ENCODE measurements at regions of chr9 and their contacts with region 1.

Region 1: GRCh38 chr9:111803924-111804323 is 9.2 kb upstream of the SHOC1 start:
- DNase-seq: no peak
- ATAC-seq: no peak
- H3K4me3 Mint-ChIP-seq: no peak overlapping the region
- H3K27ac Mint-ChIP-seq: no peak overlapping the region
- H3K4me1 Mint-ChIP-seq: peaks cover 3% of the 10 kb centered on the region
- H3K27me3 Mint-ChIP-seq: no peaks in the 10 kb centered on the region
- CTCF ChIP-seq: no peak

Region 2: GRCh38 chr9:110156902-110157301 is 1647.0 kb before region 1 on chr9:
- CTCF ChIA-PET with region 1: no interaction called
- POLR2A ChIA-PET with region 1: no interaction called
- intact Hi-C with region 1: no loop called
- DNase-seq: no peak
- ATAC-seq: peak; percentile 76
- H3K4me3 Mint-ChIP-seq: peak overlapping the region; percentile 28
- H3K27ac Mint-ChIP-seq: peak overlapping the region; percentile 68
- H3K4me1 Mint-ChIP-seq: peaks cover 99% of the 10 kb centered on the region
- H3K27me3 Mint-ChIP-seq: no peaks in the 10 kb centered on the region
- CTCF ChIP-seq: no peak

Region 3: DNA sequence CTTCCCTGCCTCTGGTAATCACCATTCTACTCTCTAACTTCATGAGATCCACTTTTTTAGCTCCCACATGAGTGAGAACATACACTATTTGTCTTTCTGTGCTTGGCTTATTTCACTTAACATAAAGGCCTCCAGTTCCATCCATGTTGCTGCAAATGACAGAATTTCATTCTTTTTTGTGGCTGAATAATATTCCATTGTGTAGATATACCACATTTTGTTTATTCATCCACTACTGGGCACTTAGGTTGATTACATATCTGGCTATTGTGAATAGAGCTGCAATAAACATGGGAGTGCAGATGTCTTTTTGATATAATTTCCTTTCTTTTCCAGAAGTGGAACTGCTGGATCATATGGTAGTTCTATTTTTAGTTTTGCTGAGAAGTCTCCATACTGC is 37.9 kb before region 1 on chr9:
- CTCF ChIA-PET with region 1: no interaction called
- POLR2A ChIA-PET with region 1: no interaction called
- intact Hi-C with region 1: no loop called
- DNase-seq: no peak
- ATAC-seq: no peak
- H3K4me3 Mint-ChIP-seq: no peak overlapping the region
- H3K27ac Mint-ChIP-seq: no peak overlapping the region
- H3K4me1 Mint-ChIP-seq: no peaks in the 10 kb centered on the region
- H3K27me3 Mint-ChIP-seq: no peaks in the 10 kb centered on the region
- CTCF ChIP-seq: no peak

Region 4: DNA sequence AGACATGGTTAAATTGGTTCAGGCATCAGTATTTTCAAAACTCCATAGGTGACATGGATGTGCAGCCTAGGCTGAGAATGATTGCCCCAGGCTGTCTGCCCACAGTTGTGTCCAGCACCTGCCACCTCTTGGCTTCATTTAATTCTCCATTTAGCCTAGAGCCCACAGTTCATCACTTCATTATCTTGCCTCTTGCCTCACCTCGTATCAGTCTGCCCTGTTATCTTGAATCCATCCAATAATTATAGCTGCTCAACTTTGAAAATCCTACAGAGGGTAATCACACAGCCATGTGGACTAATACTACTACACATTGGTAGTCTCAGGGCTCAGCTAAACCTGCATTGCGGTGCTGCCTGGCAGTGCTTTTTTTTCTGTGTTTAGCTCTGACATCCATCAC is 100.1 kb after region 1 on chr9:
- CTCF ChIA-PET with region 1: no interaction called
- POLR2A ChIA-PET with region 1: interaction called, 11 read pairs
- intact Hi-C with region 1: no loop called
- DNase-seq: no peak
- ATAC-seq: no peak
- H3K4me3 Mint-ChIP-seq: peak overlapping the region; percentile 21
- H3K27ac Mint-ChIP-seq: peak overlapping the region; percentile 2
- H3K4me1 Mint-ChIP-seq: peaks cover 55% of the 10 kb centered on the region
- H3K27me3 Mint-ChIP-seq: no peaks in the 10 kb centered on the region
- CTCF ChIP-seq: no peak